ENCODE measurements at regions of chr4 and their contacts with region 1.

Region 1: GRCh38 chr4:122458625-122459024 is 2.1 kb upstream of the IL2 start:
- DNase-seq: peak; percentile 24
- H3K4me3 Mint-ChIP-seq: peak overlapping the region; percentile 66
- H3K27ac Mint-ChIP-seq: peak overlapping the region; percentile 77
- H3K4me1 Mint-ChIP-seq: peaks cover 43% of the 10 kb centered on the region
- H3K27me3 Mint-ChIP-seq: no peaks in the 10 kb centered on the region

Region 2: DNA sequence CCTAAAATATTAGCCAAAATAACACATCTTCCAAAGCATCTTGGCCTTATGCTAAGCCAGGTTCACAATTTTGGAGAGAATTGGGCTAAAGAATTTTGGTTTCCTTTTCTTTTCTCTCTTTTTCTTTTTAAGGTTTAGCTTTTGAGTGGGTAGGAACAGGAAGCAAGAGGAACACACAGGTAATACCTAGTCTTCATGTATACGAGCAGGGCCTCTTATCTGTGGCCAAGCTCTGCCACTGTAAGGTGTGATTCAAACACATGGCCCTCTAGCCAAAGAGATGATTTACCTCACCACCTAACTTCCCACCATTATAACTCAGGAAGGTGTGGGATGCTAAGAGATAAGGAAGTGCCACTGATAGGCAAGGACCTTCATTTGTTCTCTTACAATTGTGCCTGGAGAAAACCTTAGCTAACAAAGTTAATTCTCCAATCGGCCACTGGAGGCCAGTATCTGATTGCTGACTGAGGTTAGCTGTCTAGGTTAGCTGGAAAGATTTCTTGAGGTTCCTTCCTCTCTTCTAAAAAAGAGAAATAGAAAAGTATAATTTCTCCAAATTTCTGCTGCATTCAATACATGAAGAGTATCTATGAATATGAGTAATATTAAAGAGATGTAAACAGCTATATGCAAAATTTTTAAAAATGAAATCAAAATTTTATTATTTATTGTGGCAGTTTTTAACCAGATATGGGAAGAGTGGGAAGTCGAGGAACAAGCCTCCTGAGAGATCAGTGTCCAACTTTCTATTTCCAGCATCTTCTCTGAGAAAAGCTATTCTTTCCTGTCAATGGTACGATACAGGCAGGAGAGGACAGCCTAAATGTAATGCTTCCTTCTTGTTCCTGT is 558.3 kb before region 1 on chr4:
- intact Hi-C with region 1: loop called (anchors 10 kb)
- DNase-seq: peak; percentile 20
- H3K4me3 Mint-ChIP-seq: no peak overlapping the region
- H3K27ac Mint-ChIP-seq: no peak overlapping the region
- H3K4me1 Mint-ChIP-seq: peaks cover 6% of the 10 kb centered on the region
- H3K27me3 Mint-ChIP-seq: peaks cover 13% of the 10 kb centered on the region

Region 3: GRCh38 chr4:122117743-122118142 is 340.9 kb before region 1 on chr4:
- intact Hi-C with region 1: no loop called
- DNase-seq: no peak
- H3K4me3 Mint-ChIP-seq: no peak overlapping the region
- H3K27ac Mint-ChIP-seq: no peak overlapping the region
- H3K4me1 Mint-ChIP-seq: peaks cover 17% of the 10 kb centered on the region
- H3K27me3 Mint-ChIP-seq: no peaks in the 10 kb centered on the region

Region 4: DNA sequence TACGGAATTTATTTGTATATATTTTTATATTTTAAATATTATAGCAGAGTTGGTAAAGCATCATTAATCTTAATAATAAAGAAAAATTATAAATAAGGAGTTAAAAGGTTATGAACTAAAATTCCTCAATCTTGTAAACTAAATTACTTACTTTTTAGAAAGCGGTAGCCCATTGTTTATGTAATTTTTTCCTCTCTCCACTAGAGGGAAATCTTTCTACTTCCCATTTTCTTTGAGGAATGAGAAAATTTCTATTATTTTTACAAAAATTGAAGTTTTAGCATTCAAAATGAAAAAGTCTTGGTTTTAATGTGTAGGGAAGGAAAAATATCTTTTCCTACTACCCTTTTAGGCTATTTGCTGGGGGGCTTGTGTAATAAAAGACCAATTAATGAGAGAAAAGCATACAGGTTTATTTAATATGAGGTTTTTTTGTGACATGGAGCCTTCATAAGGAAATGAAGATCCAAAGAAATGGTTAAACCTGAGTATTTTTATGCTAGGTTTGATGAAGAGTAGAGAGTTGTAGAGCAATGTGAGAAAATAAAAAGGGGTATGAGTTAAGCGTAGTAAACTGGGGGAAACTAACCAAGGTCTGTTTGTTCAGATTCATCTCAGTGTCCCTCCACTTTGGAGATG is 148.5 kb before region 1 on chr4:
- intact Hi-C with region 1: loop called (anchors 5 kb)
- DNase-seq: no peak
- H3K4me3 Mint-ChIP-seq: no peak overlapping the region
- H3K27ac Mint-ChIP-seq: no peak overlapping the region
- H3K4me1 Mint-ChIP-seq: peaks cover 7% of the 10 kb centered on the region
- H3K27me3 Mint-ChIP-seq: no peaks in the 10 kb centered on the region

Region 5: GRCh38 chr4:122508083-122508482 is 49.5 kb after region 1 on chr4:
- intact Hi-C with region 1: loop called (anchors 1 kb)
- DNase-seq: no peak
- H3K4me3 Mint-ChIP-seq: peak overlapping the region; percentile 54
- H3K27ac Mint-ChIP-seq: peak overlapping the region; percentile 78
- H3K4me1 Mint-ChIP-seq: peaks cover 57% of the 10 kb centered on the region
- H3K27me3 Mint-ChIP-seq: peaks cover 22% of the 10 kb centered on the region

Region 6: GRCh38 chr4:122577808-122578781 is 119.5 kb after region 1 on chr4:
- intact Hi-C with region 1: loop called (anchors 1 kb)
- DNase-seq: peak; percentile 66
- H3K4me3 Mint-ChIP-seq: peak overlapping the region; percentile 63
- H3K27ac Mint-ChIP-seq: peak overlapping the region; percentile 90
- H3K4me1 Mint-ChIP-seq: peaks cover 38% of the 10 kb centered on the region
- H3K27me3 Mint-ChIP-seq: no peaks in the 10 kb centered on the region

Region 7: GRCh38 chr4:122710434-122711308 is 252.0 kb after region 1 on chr4:
- intact Hi-C with region 1: loop called (anchors 5 kb)
- DNase-seq: no peak
- H3K4me3 Mint-ChIP-seq: peak overlapping the region; percentile 62
- H3K27ac Mint-ChIP-seq: peak overlapping the region; percentile 93
- H3K4me1 Mint-ChIP-seq: peaks cover 69% of the 10 kb centered on the region
- H3K27me3 Mint-ChIP-seq: no peaks in the 10 kb centered on the region

Region 8: GRCh38 chr4:122906859-122907305 is 448.3 kb after region 1 on chr4:
- intact Hi-C with region 1: no loop called
- DNase-seq: no peak
- H3K4me3 Mint-ChIP-seq: no peak overlapping the region
- H3K27ac Mint-ChIP-seq: no peak overlapping the region
- H3K4me1 Mint-ChIP-seq: no peaks in the 10 kb centered on the region
- H3K27me3 Mint-ChIP-seq: no peaks in the 10 kb centered on the region

Region 9: DNA sequence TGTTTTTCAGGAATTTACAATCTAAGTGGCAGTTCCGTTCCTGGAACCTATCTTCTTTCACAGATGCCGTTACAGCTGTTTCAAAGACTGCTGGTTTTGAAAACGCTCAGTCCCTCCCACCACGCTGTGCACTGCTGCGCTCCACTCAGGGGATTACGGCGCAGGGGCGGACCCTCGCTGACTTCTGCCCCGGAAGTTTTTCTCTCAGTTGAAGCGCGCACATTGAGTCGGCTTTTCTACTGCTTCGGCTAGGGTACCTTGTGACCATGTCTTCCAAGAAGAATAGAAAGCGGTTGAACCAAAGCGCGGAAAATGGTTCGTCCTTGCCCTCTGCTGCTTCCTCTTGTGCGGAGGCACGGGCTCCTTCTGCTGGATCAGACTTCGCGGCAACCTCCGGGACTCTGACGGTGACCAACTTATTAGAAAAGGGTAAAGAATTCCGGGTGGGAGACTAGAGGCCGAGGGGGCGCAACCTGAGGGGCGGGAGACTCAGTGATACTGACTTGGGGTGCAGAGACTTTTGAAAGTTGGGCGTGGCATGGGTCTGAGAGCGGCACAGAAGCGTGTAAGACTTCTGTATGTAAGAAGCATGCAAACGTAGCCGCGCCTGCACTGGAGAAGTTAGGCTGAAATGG is 464.4 kb after region 1 on chr4:
- intact Hi-C with region 1: loop called (anchors 5 kb)
- DNase-seq: peak; percentile 88
- H3K4me3 Mint-ChIP-seq: peak overlapping the region; percentile 95
- H3K27ac Mint-ChIP-seq: peak overlapping the region; percentile 97
- H3K4me1 Mint-ChIP-seq: peaks cover 15% of the 10 kb centered on the region
- H3K27me3 Mint-ChIP-seq: no peaks in the 10 kb centered on the region

Measured in activated T-helper 2 cell treated with anti-CD3 and anti-CD28 coated beads, Interferon-gamma antibody, Interleukin-2, Interleukin-4, amounts not matched to agents 10 μg/mL and 5 μg/mL and 100 μg/mL, durations not matched to agents 14 hours and 24 hours and 36 hours (primary cell).